ENCODE measurements at regions of chrX and their contacts with region 1.

Region 1: DNA sequence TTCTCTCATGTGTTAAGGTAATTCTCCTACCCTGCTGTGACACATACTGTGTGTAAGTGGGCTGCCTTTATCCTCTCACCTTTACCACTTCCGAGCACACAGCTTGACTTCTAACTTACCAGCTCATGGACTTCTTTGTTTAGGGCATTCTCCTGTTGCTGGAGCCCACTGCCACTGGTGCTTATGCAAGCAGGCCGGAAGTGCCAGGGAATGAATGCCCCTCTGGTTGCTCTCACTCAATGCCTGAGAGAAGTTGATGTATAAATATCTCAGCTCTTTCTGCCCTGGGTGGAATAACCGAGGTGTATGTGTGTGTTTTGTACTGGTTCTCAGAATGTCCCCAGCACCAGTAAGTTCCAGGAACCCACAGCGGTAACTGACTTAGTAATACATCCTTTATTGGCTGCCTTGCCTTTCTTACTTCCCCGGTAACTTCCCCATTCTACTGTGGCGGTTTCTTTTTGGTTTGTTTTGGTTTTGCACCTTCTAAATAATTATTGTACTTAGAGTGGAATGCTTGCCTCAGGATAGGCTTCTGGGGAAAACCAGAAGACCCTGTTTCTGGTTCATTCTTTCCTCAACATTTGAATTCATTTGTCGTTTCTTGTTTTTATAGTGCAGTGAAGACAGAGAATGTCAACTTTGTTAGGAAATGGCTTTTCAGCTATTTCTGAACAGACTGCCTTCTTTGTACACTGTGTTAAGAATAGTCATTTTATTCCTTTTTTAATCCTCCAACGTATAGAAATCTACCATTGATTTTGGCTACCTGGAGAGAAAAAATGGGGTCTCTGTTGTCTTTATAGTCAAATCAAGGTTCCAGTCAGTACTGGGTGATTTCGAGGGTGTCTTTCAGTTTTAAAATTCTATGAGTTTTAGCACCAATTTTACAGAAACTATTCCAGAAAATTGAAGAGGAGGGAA is 45.4 kb downstream of the CXorf58 start:
- DNase-seq: peak; percentile 59
- ATAC-seq: peak; percentile 89
- H3K4me3 Mint-ChIP-seq: peak overlapping the region; percentile 75
- H3K27ac Mint-ChIP-seq: peak overlapping the region; percentile 90
- H3K4me1 Mint-ChIP-seq: peaks cover 15% of the 10 kb centered on the region
- H3K27me3 Mint-ChIP-seq: no peaks in the 10 kb centered on the region
- CTCF ChIP-seq: no peak

Region 2: DNA sequence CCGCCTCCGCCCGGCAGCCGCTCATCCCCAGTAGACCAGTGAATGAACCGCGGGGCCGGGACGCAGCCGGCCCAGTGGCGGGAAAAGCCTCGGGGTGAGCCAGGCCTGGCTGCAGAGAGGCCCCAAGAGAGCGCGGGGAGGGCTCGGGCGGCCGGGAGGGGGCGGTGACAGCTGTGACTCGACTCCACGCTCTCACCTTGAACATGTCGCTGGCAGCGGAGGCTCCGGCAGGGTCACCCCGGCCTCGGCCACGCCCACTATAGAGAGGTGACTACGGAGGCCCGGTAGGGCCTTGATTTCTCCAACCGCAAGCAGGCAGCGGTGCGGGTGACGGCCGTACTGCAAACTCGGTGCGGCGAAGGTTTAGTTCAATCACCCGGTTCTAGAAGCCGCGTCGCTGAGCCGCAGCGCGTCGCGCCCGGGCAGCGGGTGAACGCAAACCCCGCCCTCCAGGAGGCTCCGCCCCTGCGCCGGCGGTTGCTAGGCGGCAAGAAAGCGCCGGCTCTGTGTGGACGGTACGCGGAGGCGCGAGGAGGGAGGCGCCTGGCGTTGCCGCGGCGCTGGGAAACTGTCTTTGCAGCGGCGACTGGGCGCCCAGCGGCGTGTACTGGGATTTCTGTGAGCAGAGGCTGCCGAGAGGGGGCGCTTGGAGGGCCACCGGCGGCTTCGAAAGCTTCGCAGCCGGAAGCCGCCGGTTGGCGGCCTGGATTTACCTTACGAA is 45.6 kb before region 1 on chrX and contains the starts of genes APOO and CXorf58:
- CTCF ChIA-PET with region 1: interaction called, 3 read pairs
- POLR2A ChIA-PET with region 1: no interaction called
- intact Hi-C with region 1: loop called (anchors 1 kb)
- DNase-seq: peak; percentile 92
- ATAC-seq: peak; percentile 92
- H3K4me3 Mint-ChIP-seq: peak within 1 kb of the TSS; percentile 78
- H3K27ac Mint-ChIP-seq: peak within 1 kb of the TSS; percentile 91
- H3K4me1 Mint-ChIP-seq: peaks cover 19% of the 10 kb centered on the region
- H3K27me3 Mint-ChIP-seq: no peaks in the 10 kb centered on the region
- CTCF ChIP-seq: peak; percentile 58
- total RNA-seq, gene APOO: 34.1 to 35.7 TPM
- total RNA-seq, gene CXorf58: 0.14 TPM in 1 of 2 experiments, not detected in the other

Region 3: DNA sequence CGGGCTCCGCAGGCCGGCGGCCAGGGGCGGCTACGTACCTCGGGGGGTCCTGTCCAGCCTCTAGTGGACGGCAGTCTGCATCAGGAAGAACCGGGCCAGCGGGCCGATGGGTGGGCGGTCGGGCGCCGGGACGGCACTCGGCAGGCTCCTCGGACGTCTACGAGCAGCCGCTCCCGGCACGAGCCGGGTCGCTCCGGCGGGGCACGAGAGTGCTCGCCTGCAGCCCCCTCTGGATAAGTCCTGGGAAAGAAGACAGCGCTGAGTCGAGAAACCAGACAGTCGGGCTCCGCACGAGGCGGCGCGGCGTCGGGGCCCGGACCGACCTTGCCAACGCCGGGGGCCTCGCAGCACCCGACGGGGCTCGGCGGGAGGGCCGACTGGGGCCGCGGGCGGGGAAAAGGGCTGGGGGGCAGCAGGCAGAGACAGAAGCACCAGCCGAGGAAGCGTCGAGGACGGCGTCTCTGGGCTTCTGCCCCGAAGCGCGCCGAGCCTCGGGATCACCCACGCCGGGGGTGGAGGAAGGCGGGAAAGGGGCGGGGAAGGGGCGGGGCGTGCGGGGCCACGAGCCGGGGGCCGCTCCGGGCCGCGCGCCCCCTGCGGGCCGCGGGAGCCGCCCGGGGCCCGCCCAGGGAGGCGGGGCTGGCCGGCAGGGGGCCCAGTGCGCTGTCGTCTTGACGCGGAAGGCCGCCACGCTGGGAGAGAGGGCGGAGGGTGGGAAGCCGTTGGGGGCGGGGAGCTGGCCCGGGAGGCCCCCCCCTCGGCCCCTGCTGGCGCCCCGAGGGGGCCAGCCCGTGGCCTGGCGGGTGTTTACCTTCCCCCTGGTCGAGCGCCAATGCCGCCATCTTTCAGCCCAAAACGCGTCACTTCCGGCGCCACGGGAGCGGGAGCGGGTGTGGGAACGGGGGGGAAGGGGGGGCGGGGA is 71.8 kb after region 1 on chrX:
- CTCF ChIA-PET with region 1: no interaction called
- POLR2A ChIA-PET with region 1: interaction called, 5 read pairs
- intact Hi-C with region 1: loop called (anchors 5 kb)
- DNase-seq: peak; percentile 86
- ATAC-seq: peak; percentile 93
- H3K4me3 Mint-ChIP-seq: peak overlapping the region; percentile 82
- H3K27ac Mint-ChIP-seq: peak overlapping the region; percentile 80
- H3K4me1 Mint-ChIP-seq: peaks cover 21% of the 10 kb centered on the region
- H3K27me3 Mint-ChIP-seq: no peaks in the 10 kb centered on the region
- CTCF ChIP-seq: no peak